ENCODE measurements at regions of chrX and their contacts with region 1.

Region 1: DNA sequence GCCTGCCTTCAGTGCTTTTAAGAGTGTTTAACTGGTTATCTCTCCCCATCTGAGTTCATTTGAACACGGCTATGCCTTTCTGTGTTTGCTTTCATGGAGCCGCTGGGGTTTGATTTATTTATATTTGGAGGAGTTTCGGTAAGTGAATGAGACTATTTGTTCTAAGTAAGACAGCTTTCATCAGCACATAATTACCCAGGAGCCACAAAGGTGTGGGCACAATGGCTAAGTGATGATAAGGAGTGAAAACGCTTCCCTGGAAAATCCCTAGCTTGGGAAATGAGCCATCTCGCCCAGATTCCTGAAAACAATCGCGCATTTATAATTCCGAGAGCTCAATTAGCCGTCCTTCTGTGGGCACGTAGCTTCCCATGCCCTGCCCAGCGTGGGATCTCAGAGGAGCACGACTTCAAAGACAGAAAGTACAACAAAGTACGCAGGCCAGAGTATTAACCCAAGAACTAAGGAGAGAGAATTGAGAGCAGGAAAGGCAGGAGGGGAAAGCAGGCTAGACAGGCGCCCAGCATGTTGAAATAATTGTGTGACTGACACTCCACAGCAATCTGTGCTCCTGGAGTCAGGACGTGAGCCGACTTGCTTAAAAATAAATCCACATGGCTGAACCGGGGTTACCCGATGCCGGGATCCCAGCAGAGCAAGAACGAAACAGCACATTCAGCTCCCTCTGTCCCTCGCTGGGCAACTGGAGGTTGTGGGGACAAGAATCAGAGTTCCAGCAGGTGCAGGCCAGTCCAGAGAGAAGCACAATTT is 99.0 kb downstream of the DHRSX start:
- DNase-seq: peak; percentile 94
- ATAC-seq: peak; percentile 82
- H3K4me3 ChIP-seq: peak overlapping the region; percentile 51 to 67 (median 57)
- H3K27ac ChIP-seq: peak overlapping the region; percentile 78
- H3K4me1 ChIP-seq: peaks cover 48% of the 10 kb centered on the region
- H3K27me3 ChIP-seq: no peaks in the 10 kb centered on the region
- CTCF ChIP-seq: no peak
- EP300 ChIP-seq: peak in 1 of 2 experiments; percentile 68; a peak in 2 of 4 replicates
- POLR2A ChIP-seq: no peak
- RAD21 ChIP-seq: no peak

Region 2: GRCh38 chrX:2423293-2423692 is 21.5 kb after region 1 on chrX:
- CTCF ChIA-PET with region 1: no interaction called
- POLR2A ChIA-PET with region 1: no interaction called
- in situ Hi-C with region 1: no loop called
- intact Hi-C with region 1: no loop called
- DNase-seq: no peak
- ATAC-seq: no peak
- H3K4me3 ChIP-seq: no peak overlapping the region
- H3K27ac ChIP-seq: no peak overlapping the region
- H3K4me1 ChIP-seq: peaks cover 9% of the 10 kb centered on the region; the same call in 1 of the 2 replicates
- H3K27me3 ChIP-seq: no peaks in the 10 kb centered on the region
- CTCF ChIP-seq: no peak
- EP300 ChIP-seq: no peak
- POLR2A ChIP-seq: no peak
- RAD21 ChIP-seq: no peak

Region 3: GRCh38 chrX:2464677-2465166 is 62.9 kb after region 1 on chrX:
- CTCF ChIA-PET with region 1: no interaction called
- POLR2A ChIA-PET with region 1: no interaction called
- in situ Hi-C with region 1: no loop called
- intact Hi-C with region 1: loop called (anchors 5 kb)
- DNase-seq: no peak
- ATAC-seq: no peak
- H3K4me3 ChIP-seq: no peak overlapping the region
- H3K27ac ChIP-seq: no peak overlapping the region
- H3K4me1 ChIP-seq: peaks cover 27% of the 10 kb centered on the region
- H3K27me3 ChIP-seq: no peaks in the 10 kb centered on the region
- CTCF ChIP-seq: no peak
- EP300 ChIP-seq: no peak
- POLR2A ChIP-seq: no peak
- RAD21 ChIP-seq: no peak

Region 4: DNA sequence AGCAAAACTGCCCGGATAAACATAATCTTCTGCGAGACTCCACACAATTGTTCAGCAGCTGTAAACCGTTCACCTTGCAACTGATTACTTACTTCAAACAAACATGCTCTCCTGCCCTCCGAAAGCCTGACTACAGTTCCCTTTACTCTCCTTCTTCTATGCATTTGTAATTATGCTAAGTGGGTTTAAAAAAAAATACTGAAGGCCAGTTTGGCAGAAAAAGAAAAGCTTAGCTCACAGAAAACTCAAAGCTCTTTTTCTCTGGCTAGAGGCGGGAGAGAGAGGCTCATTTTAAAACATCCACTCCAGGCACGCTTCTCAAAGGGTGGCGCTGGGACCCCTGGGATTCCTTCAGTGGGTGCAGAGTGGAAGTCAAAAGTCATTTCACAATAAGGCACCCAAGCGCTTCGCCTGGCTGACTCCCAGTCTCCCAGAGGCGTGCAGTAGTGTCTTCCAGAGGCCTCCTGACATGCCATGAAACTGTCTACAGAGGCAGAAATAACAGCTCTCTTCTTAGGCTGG is 97.1 kb after region 1 on chrX:
- CTCF ChIA-PET with region 1: no interaction called
- POLR2A ChIA-PET with region 1: no interaction called
- in situ Hi-C with region 1: no loop called
- intact Hi-C with region 1: loop called (anchors 5 kb)
- DNase-seq: peak; percentile 65
- ATAC-seq: peak; percentile 47
- H3K4me3 ChIP-seq: peak overlapping the region; percentile 87 to 99 (median 91)
- H3K27ac ChIP-seq: peak overlapping the region; percentile 92
- H3K4me1 ChIP-seq: peaks cover 55% of the 10 kb centered on the region
- H3K27me3 ChIP-seq: no peaks in the 10 kb centered on the region; a peak in 1 of 5 replicates
- CTCF ChIP-seq: no peak
- EP300 ChIP-seq: no peak
- POLR2A ChIP-seq: 0 out of 4 replicates have a peak, but pooled peaks of 1 of the 2 experiments have one; percentile 18
- RAD21 ChIP-seq: no peak

Region 5: GRCh38 chrX:2589186-2590030 is 187.6 kb after region 1 on chrX:
- CTCF ChIA-PET with region 1: no interaction called
- POLR2A ChIA-PET with region 1: no interaction called
- in situ Hi-C with region 1: no loop called
- intact Hi-C with region 1: loop called (anchors 5 kb)
- DNase-seq: no peak
- ATAC-seq: no peak
- H3K4me3 ChIP-seq: no peak overlapping the region
- H3K27ac ChIP-seq: no peak overlapping the region
- H3K4me1 ChIP-seq: peaks cover 5% of the 10 kb centered on the region; the same call in 1 of the 2 replicates
- H3K27me3 ChIP-seq: peaks cover 0 to 10% of the 10 kb centered on the region in 2 experiments; a peak in 4 of 5 replicates
- CTCF ChIP-seq: no peak
- EP300 ChIP-seq: no peak
- POLR2A ChIP-seq: no peak
- RAD21 ChIP-seq: no peak